ENCODE measurements at regions of chr2 and their contacts with region 1.

Region 1: GRCh38 chr2:95022309-95023221 is 2.9 kb upstream of the MAL start:
- DNase-seq: peak; percentile 92
- ATAC-seq: peak; percentile 69
- H3K4me3 Mint-ChIP-seq: no peak overlapping the region
- H3K27ac Mint-ChIP-seq: peak overlapping the region; percentile 13
- H3K4me1 Mint-ChIP-seq: peaks cover 42% of the 10 kb centered on the region
- H3K27me3 Mint-ChIP-seq: no peaks in the 10 kb centered on the region

Region 2: GRCh38 chr2:95034221-95034620 is 11.7 kb after region 1 on chr2:
- CTCF ChIA-PET with region 1: interaction called, 38 read pairs
- POLR2A ChIA-PET with region 1: no interaction called
- intact Hi-C with region 1: no loop called
- DNase-seq: peak; percentile 50
- ATAC-seq: peak; percentile 84
- H3K4me3 Mint-ChIP-seq: no peak overlapping the region
- H3K27ac Mint-ChIP-seq: no peak overlapping the region
- H3K4me1 Mint-ChIP-seq: peaks cover 79% of the 10 kb centered on the region
- H3K27me3 Mint-ChIP-seq: no peaks in the 10 kb centered on the region

Region 3: DNA sequence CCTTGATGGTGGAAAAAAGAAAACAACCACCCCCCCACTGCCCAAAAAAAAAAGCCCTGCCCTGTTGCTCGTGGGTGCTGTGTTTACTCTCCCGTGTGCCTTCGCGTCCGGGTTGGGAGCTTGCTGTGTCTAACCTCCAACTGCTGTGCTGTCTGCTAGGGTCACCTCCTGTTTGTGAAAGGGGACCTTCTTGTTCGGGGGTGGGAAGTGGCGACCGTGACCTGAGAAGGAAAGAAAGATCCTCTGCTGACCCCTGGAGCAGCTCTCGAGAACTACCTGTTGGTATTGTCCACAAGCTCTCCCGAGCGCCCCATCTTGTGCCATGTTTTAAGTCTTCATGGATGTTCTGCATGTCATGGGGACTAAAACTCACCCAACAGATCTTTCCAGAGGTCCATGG is 31.0 kb after region 1 on chr2:
- CTCF ChIA-PET with region 1: interaction called, 89 read pairs
- POLR2A ChIA-PET with region 1: no interaction called
- intact Hi-C with region 1: loop called (anchors 1 kb)
- DNase-seq: peak; percentile 51
- ATAC-seq: no peak
- H3K4me3 Mint-ChIP-seq: no peak overlapping the region
- H3K27ac Mint-ChIP-seq: no peak overlapping the region
- H3K4me1 Mint-ChIP-seq: peaks cover 67% of the 10 kb centered on the region
- H3K27me3 Mint-ChIP-seq: no peaks in the 10 kb centered on the region

Region 4: GRCh38 chr2:95115418-95115817 is 92.9 kb after region 1 on chr2:
- CTCF ChIA-PET with region 1: interaction called, 114 read pairs
- POLR2A ChIA-PET with region 1: no interaction called
- intact Hi-C with region 1: loop called (anchors 1 kb)
- DNase-seq: peak; percentile 85
- ATAC-seq: peak; percentile 98
- H3K4me3 Mint-ChIP-seq: no peak overlapping the region
- H3K27ac Mint-ChIP-seq: no peak overlapping the region
- H3K4me1 Mint-ChIP-seq: peaks cover 39% of the 10 kb centered on the region
- H3K27me3 Mint-ChIP-seq: no peaks in the 10 kb centered on the region

Region 5: DNA sequence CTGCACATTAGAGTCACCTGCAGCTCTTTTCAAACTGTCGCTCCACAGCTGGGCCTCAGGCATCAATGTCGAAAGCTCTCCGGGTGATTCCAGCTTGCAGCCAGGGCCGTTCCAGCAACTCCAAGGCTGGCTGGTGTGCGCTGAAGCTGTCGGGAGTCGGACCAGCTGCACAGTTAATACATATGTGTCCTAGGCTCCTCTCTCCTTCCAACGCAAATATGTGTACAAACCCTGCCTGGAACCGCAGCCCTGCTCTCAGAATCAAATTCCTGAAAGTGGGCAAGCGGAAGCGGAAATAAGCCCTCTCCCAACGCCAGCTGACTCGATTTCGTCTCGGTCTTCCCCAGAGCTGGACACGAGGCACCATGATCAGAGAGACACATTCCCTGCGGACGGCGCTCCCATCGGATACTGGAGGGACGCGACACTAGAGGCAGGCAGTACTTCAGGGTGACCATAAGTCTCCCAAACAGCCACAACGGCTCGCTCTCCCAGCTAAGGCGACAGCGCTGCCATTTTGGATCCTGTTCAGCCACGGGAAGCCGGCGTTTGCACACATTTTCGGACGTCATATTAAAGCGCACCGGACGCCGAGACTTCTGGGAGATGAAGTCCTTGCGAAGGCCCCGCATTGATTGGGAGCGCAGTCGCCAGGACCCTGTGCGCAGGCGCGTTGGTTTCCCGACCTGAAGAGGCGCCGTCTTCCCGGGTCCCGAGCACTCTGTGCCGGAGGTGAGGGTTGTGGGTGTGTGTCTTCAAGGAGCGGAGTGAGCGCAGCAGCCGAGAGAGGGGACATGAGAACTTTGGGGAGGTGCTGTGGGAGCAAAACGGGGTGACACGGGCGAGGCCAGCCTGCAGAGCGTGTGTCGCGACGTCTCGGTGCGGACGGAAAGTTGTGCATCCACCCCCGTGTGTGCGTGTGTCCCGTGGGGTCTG is 142.8 kb after region 1 on chr2 and contains the start of gene ZNF2:
- CTCF ChIA-PET with region 1: interaction called, 8 read pairs
- POLR2A ChIA-PET with region 1: no interaction called
- intact Hi-C with region 1: loop called (anchors 2 to 5 kb)
- DNase-seq: peak; percentile 98
- ATAC-seq: peak; percentile 98
- H3K4me3 Mint-ChIP-seq: peak within 1 kb of the TSS; percentile 96
- H3K27ac Mint-ChIP-seq: peak within 1 kb of the TSS; percentile 94
- H3K4me1 Mint-ChIP-seq: peaks cover 24% of the 10 kb centered on the region
- H3K27me3 Mint-ChIP-seq: no peaks in the 10 kb centered on the region
- total RNA-seq, gene ZNF2: 4.3 to 5.1 TPM

Region 6: DNA sequence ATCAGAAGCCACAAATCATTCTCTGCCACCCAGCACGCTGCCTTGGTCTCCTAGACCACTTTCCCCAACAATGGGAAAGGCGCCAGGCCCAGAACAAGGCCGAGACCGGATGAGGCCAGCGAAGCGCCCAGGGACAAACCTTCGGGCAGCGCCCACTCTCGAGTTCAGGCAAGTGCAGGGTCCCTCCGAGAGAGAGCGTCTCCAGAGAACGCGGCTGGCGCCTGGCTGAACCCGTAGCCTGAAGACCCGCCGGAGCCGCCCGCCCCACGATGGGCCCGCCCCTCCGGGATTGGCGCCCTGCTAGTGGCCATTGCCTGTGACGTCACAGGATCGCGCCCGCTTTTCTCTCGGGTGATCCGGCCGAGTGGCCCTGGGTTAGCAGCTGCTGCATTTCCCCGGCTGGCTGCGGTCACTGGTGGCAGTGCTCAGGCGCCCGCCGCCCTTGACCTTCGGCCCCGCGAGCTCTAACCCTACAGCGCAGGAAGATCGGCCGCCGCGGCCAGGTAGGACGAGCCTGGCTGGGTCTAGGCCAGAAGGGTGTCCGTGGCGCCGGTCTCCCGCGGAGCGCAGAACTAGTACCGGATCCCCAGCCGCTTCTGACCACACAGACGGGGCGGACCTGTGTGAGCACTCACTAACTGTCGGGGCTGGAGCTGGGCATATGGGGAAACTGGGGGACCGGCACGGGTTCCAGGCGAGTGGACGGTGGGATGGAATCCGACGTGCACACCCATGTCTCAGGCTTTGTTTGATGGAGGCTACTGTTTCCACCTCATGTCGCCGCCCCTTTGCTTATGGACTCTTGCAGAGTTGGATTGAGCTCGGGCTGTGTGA is 380.0 kb after region 1 on chr2 and contains the start of gene FAHD2A:
- CTCF ChIA-PET with region 1: no interaction called
- POLR2A ChIA-PET with region 1: no interaction called
- intact Hi-C with region 1: loop called in 1 of 2 experiments (anchors 2 kb)
- DNase-seq: peak; percentile 98
- ATAC-seq: peak; percentile 95
- H3K4me3 Mint-ChIP-seq: peak within 1 kb of the TSS; percentile 91
- H3K27ac Mint-ChIP-seq: peak within 1 kb of the TSS; percentile 95
- H3K4me1 Mint-ChIP-seq: peaks cover 16% of the 10 kb centered on the region
- H3K27me3 Mint-ChIP-seq: no peaks in the 10 kb centered on the region
- total RNA-seq, gene FAHD2A: 37.9 to 41.2 TPM

Region 7: GRCh38 chr2:96970248-96970875 is 1947.8 kb after region 1 on chr2:
- CTCF ChIA-PET with region 1: no interaction called
- POLR2A ChIA-PET with region 1: no interaction called
- intact Hi-C with region 1: no loop called
- DNase-seq: no peak
- ATAC-seq: no peak
- H3K4me3 Mint-ChIP-seq: no peak overlapping the region
- H3K27ac Mint-ChIP-seq: no peak overlapping the region
- H3K4me1 Mint-ChIP-seq: peaks cover 27% of the 10 kb centered on the region
- H3K27me3 Mint-ChIP-seq: peaks cover 1% of the 10 kb centered on the region

Measured in activated CD4-positive, alpha-beta T cell treated with anti-CD3 and anti-CD28 coated beads for 36 hours (primary cell).